Endothelial cell of umbilical vein (primary cell): ENCODE measurements at regions of chr4 and their contacts with region 1.

Region 1: GRCh38 chr4:169024762-169025161 is 14.7 kb upstream of the CBR4 start:
- DNase-seq: peak; percentile 68
- H3K4me3 ChIP-seq: no peak overlapping the region
- H3K27ac ChIP-seq: no peak overlapping the region
- H3K4me1 ChIP-seq: no peaks in the 10 kb centered on the region
- H3K27me3 ChIP-seq: no peaks in the 10 kb centered on the region
- CTCF ChIP-seq: peak; percentile 51 to 57
- POLR2A ChIP-seq: no peak

Region 2: GRCh38 chr4:168803732-168804131 is 221.0 kb before region 1 on chr4:
- CTCF ChIA-PET with region 1: no interaction called
- POLR2A ChIA-PET with region 1: no interaction called
- dilution Hi-C with region 1: no loop called
- intact Hi-C with region 1: no loop called
- DNase-seq: peak; percentile 89
- H3K4me3 ChIP-seq: no peak overlapping the region
- H3K27ac ChIP-seq: peak overlapping the region; percentile 17
- H3K4me1 ChIP-seq: no peaks in the 10 kb centered on the region
- H3K27me3 ChIP-seq: no peaks in the 10 kb centered on the region
- CTCF ChIP-seq: no peak
- POLR2A ChIP-seq: no peak

Region 3: DNA sequence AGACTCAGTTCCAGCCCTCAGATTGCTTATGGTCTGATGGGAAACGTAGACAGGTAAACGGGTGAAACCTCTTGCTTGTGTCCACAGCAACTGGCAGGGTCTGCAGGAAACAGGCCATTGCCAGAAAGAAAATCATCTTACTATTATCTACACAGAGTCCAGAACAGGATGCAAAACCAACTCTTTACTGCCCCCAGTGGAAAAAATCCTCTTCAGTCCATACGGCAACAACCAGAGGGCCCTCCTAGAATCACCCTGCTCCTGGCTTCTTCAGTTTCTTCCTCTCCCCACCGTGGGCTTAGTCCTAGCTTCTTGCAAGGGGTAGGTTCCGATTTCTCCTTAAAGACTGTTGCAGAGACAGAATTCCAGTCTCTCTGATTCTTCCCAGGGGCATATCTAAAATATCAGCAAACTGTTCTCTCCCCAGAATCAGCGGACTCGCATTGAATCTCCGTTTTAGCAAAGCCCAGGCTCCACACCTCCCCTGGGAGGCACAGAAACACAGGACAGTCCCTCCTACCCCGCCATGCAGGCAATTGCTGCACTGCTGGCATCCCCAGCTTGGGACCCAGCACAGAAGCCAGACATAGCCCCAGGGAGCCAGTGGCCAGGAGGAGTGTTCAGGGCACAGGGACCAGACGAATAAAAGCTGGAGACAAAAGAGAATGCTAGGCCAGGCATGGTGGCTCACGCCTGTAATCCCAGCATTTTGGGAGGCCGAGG is 287.0 kb after region 1 on chr4:
- CTCF ChIA-PET with region 1: interaction called, 7 read pairs
- POLR2A ChIA-PET with region 1: no interaction called
- dilution Hi-C with region 1: no loop called
- intact Hi-C with region 1: loop called (anchors 1 kb)
- DNase-seq: peak; percentile 57
- H3K4me3 ChIP-seq: no peak overlapping the region
- H3K27ac ChIP-seq: no peak overlapping the region
- H3K4me1 ChIP-seq: peaks cover 13% of the 10 kb centered on the region
- H3K27me3 ChIP-seq: no peaks in the 10 kb centered on the region
- CTCF ChIP-seq: peak; percentile 60 to 66
- POLR2A ChIP-seq: no peak